K562 (cell line): ENCODE measurements at regions of chr10 and their contacts with region 1.

Region 1: GRCh38 chr10:42552493-42553407 is 85.6 kb downstream of the ZNF33B start:
- DNase-seq: peak; percentile 91 to 99 (median 94)
- ATAC-seq: peak; percentile 95
- H3K4me3 ChIP-seq: peak overlapping the region; percentile 72
- H3K27ac ChIP-seq: peak overlapping the region; percentile 68
- H3K4me1 ChIP-seq: peaks cover 0 to 17% of the 10 kb centered on the region in 2 experiments; a peak in 3 of 5 replicates
- H3K27me3 ChIP-seq: no peaks in the 10 kb centered on the region
- CTCF ChIP-seq: no peak
- EP300 ChIP-seq: no peak
- POLR2A ChIP-seq: peak; percentile 78
- RAD21 ChIP-seq: no peak

Region 2: DNA sequence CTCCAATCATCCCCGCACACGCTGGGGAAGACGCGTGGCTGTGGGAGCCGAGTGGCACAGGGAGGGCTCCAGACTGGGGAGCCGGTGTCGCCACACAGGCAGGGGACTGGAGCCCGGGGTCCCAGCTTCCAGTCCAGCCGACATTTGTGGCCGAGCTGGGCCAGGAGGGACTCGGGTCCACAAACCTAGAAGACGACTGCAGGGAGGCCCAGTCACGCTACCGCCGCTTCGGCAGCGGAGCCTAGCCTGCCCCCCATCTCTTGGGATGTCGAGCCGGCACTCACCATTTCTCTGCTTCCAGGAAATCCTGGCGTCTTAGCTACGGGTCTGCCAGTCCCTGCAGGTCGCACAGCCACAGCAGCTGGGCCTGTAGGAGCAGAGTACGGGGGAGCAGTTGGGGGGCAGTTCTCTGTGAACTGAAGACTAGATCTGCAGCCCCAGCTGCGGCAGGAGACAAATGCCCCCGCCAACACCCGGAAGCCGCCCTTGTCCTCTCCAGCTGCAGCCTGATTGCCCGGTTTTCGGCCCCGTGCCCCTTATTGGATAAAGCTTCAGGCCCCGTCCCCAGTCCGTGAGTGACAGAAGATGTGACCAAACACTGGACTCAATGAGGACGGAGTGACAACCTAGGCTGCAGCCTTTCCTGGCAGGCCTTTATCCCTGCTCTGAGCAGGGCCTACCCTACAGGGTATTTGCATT is 185.1 kb before region 1 on chr10:
- CTCF ChIA-PET with region 1: no interaction called
- POLR2A ChIA-PET with region 1: no interaction called
- in situ Hi-C with region 1: no loop called
- intact Hi-C with region 1: loop called (anchors 5 kb)
- DNase-seq: peak; percentile 92 to 97 (median 95)
- ATAC-seq: peak; percentile 99
- H3K4me3 ChIP-seq: peak overlapping the region; percentile 64
- H3K27ac ChIP-seq: peak overlapping the region; percentile 79
- H3K4me1 ChIP-seq: peaks cover 0 to 5% of the 10 kb centered on the region in 2 experiments; a peak in 2 of 5 replicates
- H3K27me3 ChIP-seq: no peaks in the 10 kb centered on the region
- CTCF ChIP-seq: no peak
- EP300 ChIP-seq: no peak
- POLR2A ChIP-seq: peak; percentile 89
- RAD21 ChIP-seq: no peak

Region 3: DNA sequence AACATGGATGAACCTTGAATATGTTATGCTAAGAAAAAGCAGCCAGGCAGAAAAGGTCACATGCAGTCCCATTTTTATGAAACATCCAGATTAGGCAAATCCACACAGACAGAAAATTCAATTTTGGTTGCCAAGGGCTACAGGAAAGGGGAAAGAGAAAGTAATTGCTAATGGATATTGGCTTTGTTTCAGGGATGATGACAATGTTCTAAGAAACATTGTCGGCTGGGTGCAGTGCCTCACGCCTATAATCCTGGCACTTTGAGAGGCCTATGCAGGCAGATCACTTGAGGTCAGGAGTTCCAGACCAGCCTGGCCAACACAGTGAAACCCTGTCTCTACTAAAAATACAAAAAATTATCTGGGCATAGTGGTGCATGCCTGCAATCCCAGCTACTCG is 62.7 kb after region 1 on chr10:
- CTCF ChIA-PET with region 1: no interaction called
- POLR2A ChIA-PET with region 1: no interaction called
- in situ Hi-C with region 1: loop called (anchors 5 kb)
- intact Hi-C with region 1: no loop called
- DNase-seq: no peak
- ATAC-seq: no peak
- H3K4me3 ChIP-seq: no peak overlapping the region
- H3K27ac ChIP-seq: no peak overlapping the region
- H3K4me1 ChIP-seq: no peaks in the 10 kb centered on the region; a peak in 1 of 5 replicates
- H3K27me3 ChIP-seq: no peaks in the 10 kb centered on the region
- CTCF ChIP-seq: no peak
- EP300 ChIP-seq: no peak
- POLR2A ChIP-seq: no peak
- RAD21 ChIP-seq: no peak

Region 4: GRCh38 chr10:42638055-42638820 is 85.5 kb after region 1 on chr10 and contains the start of gene ZNF33B:
- CTCF ChIA-PET with region 1: no interaction called
- POLR2A ChIA-PET with region 1: no interaction called
- in situ Hi-C with region 1: no loop called
- intact Hi-C with region 1: loop called (anchors 2 kb)
- DNase-seq: peak; percentile 95 to 99 (median 96)
- ATAC-seq: peak; percentile 97
- H3K4me3 ChIP-seq: peak within 1 kb of the TSS; percentile 77
- H3K27ac ChIP-seq: peak within 1 kb of the TSS; percentile 92
- H3K4me1 ChIP-seq: peaks cover 9 to 23% of the 10 kb centered on the region in 2 experiments; a peak in 4 of 5 replicates
- H3K27me3 ChIP-seq: no peaks in the 10 kb centered on the region
- CTCF ChIP-seq: no peak
- EP300 ChIP-seq: no peak
- POLR2A ChIP-seq: peak; percentile 98
- RAD21 ChIP-seq: peak in 1 of 2 experiments; percentile 9; a peak in 1 of 4 replicates
- polyA plus RNA-seq, gene ZNF33B: 9.8 to 13.1 TPM

Region 5: GRCh38 chr10:42782446-42783180 is 229.9 kb after region 1 on chr10 and contains the start of gene BMS1:
- CTCF ChIA-PET with region 1: no interaction called
- POLR2A ChIA-PET with region 1: no interaction called
- in situ Hi-C with region 1: no loop called
- intact Hi-C with region 1: loop called (anchors 5 kb)
- DNase-seq: peak; percentile 88 to 97 (median 90)
- ATAC-seq: peak; percentile 96
- H3K4me3 ChIP-seq: peak within 1 kb of the TSS; percentile 66
- H3K27ac ChIP-seq: peak within 1 kb of the TSS; percentile 91
- H3K4me1 ChIP-seq: peaks cover 0 to 12% of the 10 kb centered on the region in 2 experiments; a peak in 3 of 5 replicates
- H3K27me3 ChIP-seq: peaks cover 0 to 7% of the 10 kb centered on the region in 2 experiments; a peak in 2 of 5 replicates
- CTCF ChIP-seq: no peak
- EP300 ChIP-seq: peak; percentile 72
- POLR2A ChIP-seq: peak; percentile 99
- RAD21 ChIP-seq: peak in 1 of 2 experiments; percentile 33; a peak in 2 of 4 replicates
- polyA plus RNA-seq, gene BMS1: 11.1 to 25.7 TPM